ENCODE measurements at regions of chr3 and their contacts with region 1.

Region 1: DNA sequence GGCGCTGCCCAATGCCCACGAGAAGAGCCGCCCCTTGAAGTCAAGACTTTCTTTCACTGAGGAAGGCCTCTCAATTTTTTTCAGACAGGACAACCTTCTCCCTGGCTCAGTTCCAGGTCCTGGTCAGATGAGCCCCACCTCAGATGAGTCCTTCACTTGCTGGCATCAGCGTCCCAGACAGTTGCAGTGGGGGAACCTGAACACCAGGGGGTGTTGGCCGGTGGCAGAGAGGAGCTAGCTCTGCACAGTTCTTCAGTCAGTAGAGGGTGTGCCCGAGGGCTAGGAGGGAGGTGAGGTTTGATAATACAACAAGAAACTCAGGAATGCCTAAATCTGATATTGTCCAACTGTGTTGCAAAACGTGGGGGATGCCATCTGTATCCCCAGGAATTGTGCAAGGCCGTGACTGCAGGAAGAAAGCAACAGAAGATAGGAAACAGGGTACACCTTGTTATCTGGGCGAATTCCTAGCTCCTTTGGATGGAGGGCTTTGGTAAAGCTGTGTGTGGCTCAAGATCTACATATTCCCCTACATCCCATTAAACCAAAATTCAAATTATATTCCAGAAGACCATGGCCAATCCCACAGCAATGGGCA is 34.3 kb downstream of the CCR3 start:
- DNase-seq: peak; percentile 89
- ATAC-seq: peak; percentile 83
- H3K4me3 Mint-ChIP-seq: no peak overlapping the region
- H3K27ac Mint-ChIP-seq: peak overlapping the region; percentile 85
- H3K4me1 Mint-ChIP-seq: peaks cover 64% of the 10 kb centered on the region
- H3K27me3 Mint-ChIP-seq: peaks cover 3% of the 10 kb centered on the region

Region 2: DNA sequence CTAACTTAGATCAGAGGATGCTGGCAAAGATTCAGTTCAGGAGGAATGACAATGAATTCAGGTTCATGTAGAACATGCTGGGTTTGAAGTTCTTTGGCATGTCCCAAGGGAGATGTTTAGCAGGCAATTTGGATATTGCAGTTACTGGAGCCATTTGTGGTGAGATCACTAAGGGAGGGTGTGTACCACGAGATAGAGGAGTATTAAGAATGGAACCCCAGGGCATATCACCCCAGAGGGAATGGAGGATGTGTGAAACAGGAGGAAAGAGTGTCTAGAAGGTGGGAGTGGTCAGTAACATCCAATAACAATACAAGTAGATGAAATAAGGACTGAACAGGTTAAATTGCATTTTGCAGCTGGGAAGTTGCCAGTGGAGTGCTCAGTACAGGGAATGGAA is 155.6 kb before region 1 on chr3:
- CTCF ChIA-PET with region 1: no interaction called
- POLR2A ChIA-PET with region 1: no interaction called
- DNase-seq: no peak
- ATAC-seq: no peak
- H3K4me3 Mint-ChIP-seq: no peak overlapping the region
- H3K27ac Mint-ChIP-seq: no peak overlapping the region
- H3K4me1 Mint-ChIP-seq: peaks cover 8% of the 10 kb centered on the region
- H3K27me3 Mint-ChIP-seq: peaks cover 18% of the 10 kb centered on the region

Region 3: GRCh38 chr3:46186471-46187340 is 89.9 kb before region 1 on chr3:
- CTCF ChIA-PET with region 1: no interaction called
- POLR2A ChIA-PET with region 1: no interaction called
- DNase-seq: no peak
- ATAC-seq: peak; percentile 82
- H3K4me3 Mint-ChIP-seq: peak overlapping the region; percentile 2
- H3K27ac Mint-ChIP-seq: peak overlapping the region; percentile 72
- H3K4me1 Mint-ChIP-seq: peaks cover 46% of the 10 kb centered on the region
- H3K27me3 Mint-ChIP-seq: peaks cover 2% of the 10 kb centered on the region

Region 4: GRCh38 chr3:46200211-46200610 is 76.4 kb before region 1 on chr3:
- CTCF ChIA-PET with region 1: no interaction called
- POLR2A ChIA-PET with region 1: no interaction called
- DNase-seq: no peak
- ATAC-seq: no peak
- H3K4me3 Mint-ChIP-seq: no peak overlapping the region
- H3K27ac Mint-ChIP-seq: no peak overlapping the region
- H3K4me1 Mint-ChIP-seq: peaks cover 42% of the 10 kb centered on the region
- H3K27me3 Mint-ChIP-seq: no peaks in the 10 kb centered on the region

Region 5: GRCh38 chr3:46266598-46266997 is 10.0 kb before region 1 on chr3:
- CTCF ChIA-PET with region 1: interaction called, 16 read pairs
- POLR2A ChIA-PET with region 1: interaction called, 3 read pairs
- DNase-seq: no peak
- ATAC-seq: no peak
- H3K4me3 Mint-ChIP-seq: no peak overlapping the region
- H3K27ac Mint-ChIP-seq: no peak overlapping the region
- H3K4me1 Mint-ChIP-seq: peaks cover 51% of the 10 kb centered on the region
- H3K27me3 Mint-ChIP-seq: no peaks in the 10 kb centered on the region

Region 6: GRCh38 chr3:46303240-46303639 is 26.6 kb after region 1 on chr3:
- CTCF ChIA-PET with region 1: interaction called, 28 read pairs
- POLR2A ChIA-PET with region 1: interaction called, 3 read pairs
- DNase-seq: no peak
- ATAC-seq: no peak
- H3K4me3 Mint-ChIP-seq: no peak overlapping the region
- H3K27ac Mint-ChIP-seq: no peak overlapping the region
- H3K4me1 Mint-ChIP-seq: peaks cover 53% of the 10 kb centered on the region
- H3K27me3 Mint-ChIP-seq: peaks cover 5% of the 10 kb centered on the region

Region 7: GRCh38 chr3:46349485-46350261 is 73.1 kb after region 1 on chr3:
- CTCF ChIA-PET with region 1: interaction called, 21 read pairs
- POLR2A ChIA-PET with region 1: interaction called, 3 read pairs
- DNase-seq: peak; percentile 68
- ATAC-seq: peak; percentile 54
- H3K4me3 Mint-ChIP-seq: peak overlapping the region; percentile 59
- H3K27ac Mint-ChIP-seq: peak overlapping the region; percentile 91
- H3K4me1 Mint-ChIP-seq: peaks cover 80% of the 10 kb centered on the region
- H3K27me3 Mint-ChIP-seq: no peaks in the 10 kb centered on the region

Measured in activated CD8-positive, alpha-beta T cell treated with anti-CD3 and anti-CD28 coated beads, Interleukin-2, amount 10 ng/mL, durations not matched to agents 7 days and 5 days (primary cell).